ENCODE measurements at regions of chr5 and their contacts with region 1.

Region 1: GRCh38 chr5:175534070-175534932 is 55.9 kb downstream of the SFXN1 start:
- DNase-seq: peak; percentile 65 to 82
- H3K4me3 ChIP-seq: no peak overlapping the region
- H3K27ac ChIP-seq: no peak overlapping the region
- H3K4me1 ChIP-seq: peaks cover 0 to 6% (median 0%) of the 10 kb centered on the region in 4 donors
- H3K27me3 ChIP-seq: no peaks in the 10 kb centered on the region
- CTCF ChIP-seq: peak; percentile 99

Region 2: DNA sequence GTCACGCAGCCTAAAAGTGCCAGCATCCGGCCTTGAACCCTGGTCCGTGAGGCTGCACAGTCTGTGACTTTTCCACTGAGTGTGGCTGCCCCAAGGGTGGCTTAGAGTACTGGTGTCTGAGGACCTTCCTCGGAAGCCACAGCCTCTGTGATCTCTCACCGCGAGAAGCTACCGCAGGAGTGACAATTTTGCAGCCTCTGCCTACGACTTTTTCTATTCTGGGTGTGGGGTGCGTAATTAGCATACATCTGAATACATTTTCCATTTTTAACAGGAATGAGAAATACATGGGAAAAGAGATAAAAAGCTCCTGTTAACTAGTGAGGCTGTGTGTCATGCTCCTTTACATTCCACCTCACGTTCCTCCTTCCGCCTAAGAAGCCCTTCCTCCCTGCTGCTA is 75.2 kb after region 1 on chr5:
- intact Hi-C with region 1: no loop called
- DNase-seq: no peak
- H3K4me3 ChIP-seq: no peak overlapping the region
- H3K27ac ChIP-seq: no peak overlapping the region
- H3K4me1 ChIP-seq: peaks cover 0 to 10% (median 1%) of the 10 kb centered on the region in 4 donors
- H3K27me3 ChIP-seq: no peaks in the 10 kb centered on the region
- CTCF ChIP-seq: no peak

Region 3: GRCh38 chr5:175729829-175730277 is 195.6 kb after region 1 on chr5:
- intact Hi-C with region 1: loop called (anchors 5 kb)
- DNase-seq: peak; percentile 89 to 90
- H3K4me3 ChIP-seq: no peak overlapping the region
- H3K27ac ChIP-seq: no peak overlapping the region
- H3K4me1 ChIP-seq: peaks cover 0 to 8% (median 3%) of the 10 kb centered on the region in 4 donors
- H3K27me3 ChIP-seq: peaks cover 0 to 55% of the 10 kb centered on the region in 2 donors
- CTCF ChIP-seq: peak; percentile 86 to 93

Measured in tibial artery (tissue), 4 donors.